PC-9 (cell line): ENCODE measurements at regions of chr5 and their contacts with region 1.

Region 1: GRCh38 chr5:80109646-80110478 is 74.7 kb downstream of the THBS4 start:
- DNase-seq: no peak
- H3K4me3 ChIP-seq: no peak overlapping the region
- H3K27ac ChIP-seq: no peak overlapping the region
- H3K4me1 ChIP-seq: no peaks in the 10 kb centered on the region
- H3K27me3 ChIP-seq: no peaks in the 10 kb centered on the region
- CTCF ChIP-seq: no peak

Region 2: GRCh38 chr5:79672392-79672791 is 437.5 kb before region 1 on chr5:
- CTCF ChIA-PET with region 1: no interaction called
- POLR2A ChIA-PET with region 1: no interaction called
- intact Hi-C with region 1: no loop called
- DNase-seq: no peak
- H3K4me3 ChIP-seq: no peak overlapping the region
- H3K27ac ChIP-seq: no peak overlapping the region
- H3K4me1 ChIP-seq: no peaks in the 10 kb centered on the region
- H3K27me3 ChIP-seq: no peaks in the 10 kb centered on the region
- CTCF ChIP-seq: no peak

Region 3: DNA sequence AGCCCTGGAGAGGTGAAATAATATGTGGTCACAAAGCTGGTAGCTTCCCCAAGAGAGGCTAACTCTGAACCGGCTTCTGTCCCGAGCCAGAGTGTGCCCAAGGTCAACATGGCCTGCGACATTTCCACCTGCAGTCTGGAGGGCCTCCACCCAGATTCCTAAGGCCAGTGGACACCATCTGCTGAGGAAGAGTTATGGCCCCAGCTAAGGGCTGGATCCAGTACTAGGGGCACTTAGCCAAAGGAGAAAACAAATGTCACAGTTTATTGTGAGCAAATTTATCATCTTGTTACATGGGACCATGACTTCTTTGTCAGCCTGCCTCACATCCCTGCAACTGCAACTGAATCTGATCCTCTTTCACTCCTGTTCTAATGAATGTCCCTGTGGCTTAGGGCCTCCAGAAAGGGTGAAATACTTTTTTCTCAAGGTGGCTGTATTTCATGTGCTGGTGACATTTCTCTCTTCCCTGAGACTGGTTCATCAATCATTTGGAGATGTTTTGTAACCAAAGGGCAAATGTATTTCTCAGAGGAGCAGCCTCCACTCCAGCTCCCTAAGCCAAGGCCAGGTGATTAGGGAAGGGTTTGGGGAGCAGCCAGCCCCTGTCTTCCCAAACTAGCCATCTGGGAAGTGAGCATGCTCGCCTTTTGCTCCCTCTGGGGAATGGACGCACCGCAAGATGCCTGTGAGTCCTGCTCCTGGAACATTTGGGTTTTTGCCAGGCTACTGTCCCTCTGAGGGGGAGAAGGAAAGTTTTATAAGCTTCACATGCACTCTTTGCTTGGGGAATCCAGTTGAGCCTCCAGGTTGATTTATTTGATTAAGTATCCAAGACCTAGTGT is 271.9 kb before region 1 on chr5:
- CTCF ChIA-PET with region 1: interaction called, 12 read pairs
- POLR2A ChIA-PET with region 1: no interaction called
- intact Hi-C with region 1: no loop called
- DNase-seq: no peak
- H3K4me3 ChIP-seq: no peak overlapping the region
- H3K27ac ChIP-seq: no peak overlapping the region
- H3K4me1 ChIP-seq: no peaks in the 10 kb centered on the region
- H3K27me3 ChIP-seq: no peaks in the 10 kb centered on the region
- CTCF ChIP-seq: no peak

Region 4: DNA sequence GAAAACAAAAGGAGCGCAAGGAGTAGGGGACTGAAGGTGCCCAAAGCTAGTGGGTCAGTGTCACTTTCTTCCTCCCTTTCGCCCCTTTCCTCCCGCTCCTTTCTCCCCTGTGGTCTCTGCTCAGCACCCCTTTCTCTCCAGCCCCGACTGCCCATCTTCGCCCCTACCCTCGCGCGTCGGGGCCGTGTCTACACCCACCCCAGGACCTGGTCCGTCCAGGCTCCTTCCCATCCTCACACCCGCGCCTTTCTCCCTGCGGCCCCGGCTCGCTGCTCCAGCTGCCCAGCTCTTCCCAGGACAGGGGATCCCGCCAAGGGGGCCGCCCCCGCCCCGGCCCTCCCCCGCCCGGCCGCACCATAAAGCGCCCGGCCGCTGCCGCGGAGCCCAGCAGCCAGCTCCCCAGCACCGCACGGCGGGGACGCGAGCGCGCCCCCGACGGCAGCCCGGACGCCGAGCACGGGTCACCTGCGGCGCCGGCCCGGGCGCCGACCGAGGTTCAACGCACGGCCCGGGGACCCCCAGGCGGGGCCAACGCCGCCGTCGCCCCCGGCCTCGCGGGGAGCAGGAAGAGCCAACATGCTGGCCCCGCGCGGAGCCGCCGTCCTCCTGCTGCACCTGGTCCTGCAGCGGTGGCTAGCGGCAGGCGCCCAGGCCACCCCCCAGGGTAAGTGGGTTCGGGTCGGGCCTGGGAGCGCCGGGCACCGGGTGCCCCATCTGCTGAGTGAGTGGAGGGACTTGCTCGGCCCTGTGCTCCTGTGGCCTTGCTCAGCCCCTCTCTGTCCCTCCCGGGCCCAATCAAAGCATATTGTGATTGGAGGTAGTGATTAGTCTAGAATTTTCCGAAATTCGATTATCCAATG is 74.7 kb before region 1 on chr5 and contains the start of gene THBS4:
- CTCF ChIA-PET with region 1: no interaction called
- POLR2A ChIA-PET with region 1: no interaction called
- intact Hi-C with region 1: no loop called
- DNase-seq: no peak
- H3K4me3 ChIP-seq: no peak within 1 kb of the TSS
- H3K27ac ChIP-seq: no peak within 1 kb of the TSS
- H3K4me1 ChIP-seq: no peaks in the 10 kb centered on the region
- H3K27me3 ChIP-seq: no peaks in the 10 kb centered on the region
- CTCF ChIP-seq: no peak
- total RNA-seq, gene THBS4: 6.6 and 8.1 TPM in 2 replicates

Region 5: GRCh38 chr5:80216753-80217596 is 107.1 kb after region 1 on chr5:
- CTCF ChIA-PET with region 1: no interaction called
- POLR2A ChIA-PET with region 1: no interaction called
- intact Hi-C with region 1: no loop called
- DNase-seq: no peak
- H3K4me3 ChIP-seq: no peak overlapping the region
- H3K27ac ChIP-seq: peak overlapping the region; percentile 88
- H3K4me1 ChIP-seq: peaks cover 52% of the 10 kb centered on the region
- H3K27me3 ChIP-seq: no peaks in the 10 kb centered on the region
- CTCF ChIP-seq: no peak